Naive thymus-derived CD4-positive, alpha-beta T cell (primary cell): ENCODE measurements at regions of chr13 and their contacts with region 1.

Region 1: DNA sequence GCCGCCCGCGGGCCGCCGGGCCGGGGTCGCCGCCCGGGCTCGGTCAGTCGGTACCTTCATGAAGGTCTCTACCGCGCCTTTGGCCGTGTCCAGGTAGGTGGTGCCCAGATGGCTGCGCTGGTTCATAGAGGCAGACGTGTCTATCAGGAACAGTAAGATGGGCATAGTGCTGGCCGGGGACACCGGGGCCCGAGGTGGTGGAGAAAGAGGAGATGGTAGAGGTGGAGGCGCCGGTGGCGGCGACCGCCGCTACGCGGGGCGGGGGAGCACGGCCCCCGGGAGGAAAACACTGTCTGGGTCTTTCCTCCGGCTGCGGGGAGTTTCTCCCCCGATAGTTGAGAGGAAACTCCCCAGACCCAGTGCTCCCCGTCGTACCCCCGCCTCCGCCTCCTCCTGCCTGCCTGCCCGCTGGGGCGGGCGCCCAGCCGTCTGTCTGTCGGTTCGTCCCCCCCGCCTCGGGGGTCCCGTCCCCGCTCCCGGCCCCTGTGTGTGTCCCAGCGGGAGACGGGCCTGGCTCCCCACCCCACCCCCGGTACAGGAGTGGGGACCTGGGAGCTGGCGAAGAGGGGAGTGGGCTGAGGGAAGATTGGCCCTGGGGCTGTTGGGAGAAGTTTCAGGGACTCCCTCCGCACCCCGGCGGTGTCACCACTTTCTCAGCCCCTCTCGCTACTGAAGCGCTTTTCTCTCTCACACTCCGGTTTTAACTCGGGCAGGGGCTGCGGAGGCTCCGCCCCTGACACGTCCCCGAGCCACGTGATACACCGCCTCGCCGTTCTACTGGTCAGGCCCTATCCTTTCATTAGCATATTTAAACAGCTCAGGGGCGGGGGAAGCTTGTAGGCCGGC is at the start of gene INTS6:
- DNase-seq: peak; percentile 97 to 100 (median 99)
- ATAC-seq: peak; percentile 91
- H3K4me3 ChIP-seq: peak within 1 kb of the TSS; percentile 81
- H3K4me3 Mint-ChIP-seq: peak within 1 kb of the TSS; percentile 86 to 99 (median 94)
- H3K27ac ChIP-seq: peak within 1 kb of the TSS; percentile 99
- H3K27ac Mint-ChIP-seq: peak within 1 kb of the TSS; percentile 92 to 99 (median 96)
- H3K4me1 ChIP-seq: peaks cover 27 to 32% of the 10 kb centered on the region in 2 donors
- H3K4me1 Mint-ChIP-seq: peaks cover 19 to 66% (median 45%) of the 10 kb centered on the region in 7 donors
- H3K27me3 ChIP-seq: no peaks in the 10 kb centered on the region
- H3K27me3 Mint-ChIP-seq: no peaks in the 10 kb centered on the region
- total RNA-seq, gene INTS6: 60.9 to 67.0 (median 62.7) TPM

Region 2: GRCh38 chr13:49792550-49793324 is 1659.8 kb before region 1 on chr13 and contains the start of gene KPNA3:
- CTCF ChIA-PET with region 1: no interaction called
- POLR2A ChIA-PET with region 1: interaction called, 9 read pairs
- intact Hi-C with region 1: loop called (anchors 1 kb)
- DNase-seq: peak; percentile 86 to 97 (median 95)
- ATAC-seq: peak; percentile 93
- H3K4me3 ChIP-seq: peak within 1 kb of the TSS; percentile 96
- H3K4me3 Mint-ChIP-seq: peak within 1 kb of the TSS; percentile 87 to 99 (median 96)
- H3K27ac ChIP-seq: peak within 1 kb of the TSS; percentile 80
- H3K27ac Mint-ChIP-seq: peak within 1 kb of the TSS; percentile 91 to 98 (median 96)
- H3K4me1 ChIP-seq: peaks cover 19 to 23% of the 10 kb centered on the region in 2 donors
- H3K4me1 Mint-ChIP-seq: peaks cover 19 to 42% (median 31%) of the 10 kb centered on the region in 7 donors
- H3K27me3 ChIP-seq: no peaks in the 10 kb centered on the region
- H3K27me3 Mint-ChIP-seq: peaks cover 2 to 8% (median 3%) of the 10 kb centered on the region in 5 donors
- total RNA-seq, gene KPNA3: 17.0 to 38.7 (median 19.6) TPM

Region 3: GRCh38 chr13:50893211-50893852 is 559.3 kb before region 1 on chr13:
- CTCF ChIA-PET with region 1: no interaction called
- POLR2A ChIA-PET with region 1: no interaction called
- intact Hi-C with region 1: loop called in 1 of 2 experiments (anchors 5 kb)
- DNase-seq: peak in 7 of 9 donors; percentile 34 to 68 (median 55)
- ATAC-seq: peak; percentile 91
- H3K4me3 ChIP-seq: peak overlapping the region; percentile 30
- H3K4me3 Mint-ChIP-seq: peak overlapping the region; percentile 67 to 88 (median 82)
- H3K27ac ChIP-seq: peak overlapping the region; percentile 69
- H3K27ac Mint-ChIP-seq: peak overlapping the region; percentile 82 to 98 (median 95)
- H3K4me1 ChIP-seq: peaks cover 16 to 27% of the 10 kb centered on the region in 2 donors
- H3K4me1 Mint-ChIP-seq: peaks cover 26 to 50% (median 47%) of the 10 kb centered on the region in 7 donors
- H3K27me3 ChIP-seq: no peaks in the 10 kb centered on the region
- H3K27me3 Mint-ChIP-seq: no peaks in the 10 kb centered on the region

Region 4: DNA sequence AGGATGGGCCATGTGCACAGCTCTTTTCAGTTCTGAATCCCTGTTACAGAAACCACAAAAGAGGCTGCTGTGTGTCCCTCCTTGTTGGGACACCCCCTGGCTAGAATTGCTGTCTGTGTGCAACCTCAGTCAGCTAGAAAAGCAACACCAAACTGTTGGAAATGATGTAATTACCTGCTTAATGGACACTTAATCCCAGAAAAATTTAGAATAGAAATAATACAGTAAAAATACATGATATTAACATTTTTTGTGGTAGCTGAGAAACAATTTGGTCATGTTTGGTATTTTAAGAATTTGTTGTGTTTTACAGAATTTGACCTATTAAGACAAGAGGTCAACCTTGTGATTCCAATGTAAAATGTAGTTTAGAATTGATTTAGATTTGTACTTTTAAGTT is 183.5 kb before region 1 on chr13:
- CTCF ChIA-PET with region 1: no interaction called
- POLR2A ChIA-PET with region 1: no interaction called
- intact Hi-C with region 1: no loop called
- DNase-seq: no peak
- ATAC-seq: no peak
- H3K4me3 ChIP-seq: no peak overlapping the region
- H3K4me3 Mint-ChIP-seq: no peak overlapping the region
- H3K27ac ChIP-seq: no peak overlapping the region
- H3K27ac Mint-ChIP-seq: no peak overlapping the region
- H3K4me1 ChIP-seq: no peaks in the 10 kb centered on the region
- H3K4me1 Mint-ChIP-seq: no peaks in the 10 kb centered on the region
- H3K27me3 ChIP-seq: no peaks in the 10 kb centered on the region
- H3K27me3 Mint-ChIP-seq: peaks cover 0 to 6% (median 0%) of the 10 kb centered on the region in 5 donors

Region 5: GRCh38 chr13:51475727-51476501 is 23.3 kb after region 1 on chr13:
- CTCF ChIA-PET with region 1: interaction called, 3 read pairs
- POLR2A ChIA-PET with region 1: interaction called, 16 read pairs
- intact Hi-C with region 1: no loop called
- DNase-seq: peak in 1 of 9 donors; percentile 20
- ATAC-seq: no peak
- H3K4me3 ChIP-seq: no peak overlapping the region
- H3K4me3 Mint-ChIP-seq: no peak overlapping the region
- H3K27ac ChIP-seq: no peak overlapping the region
- H3K27ac Mint-ChIP-seq: peak overlapping the region in 2 of 9 donors; percentile 17 to 22
- H3K4me1 ChIP-seq: no peaks in the 10 kb centered on the region
- H3K4me1 Mint-ChIP-seq: peaks cover 0 to 10% (median 7%) of the 10 kb centered on the region in 7 donors
- H3K27me3 ChIP-seq: no peaks in the 10 kb centered on the region
- H3K27me3 Mint-ChIP-seq: no peaks in the 10 kb centered on the region

Region 6: GRCh38 chr13:51645154-51645650 is 192.6 kb after region 1 on chr13:
- CTCF ChIA-PET with region 1: no interaction called
- POLR2A ChIA-PET with region 1: interaction called, 13 read pairs
- intact Hi-C with region 1: no loop called
- DNase-seq: peak in 8 of 9 donors; percentile 29 to 80 (median 70)
- ATAC-seq: peak; percentile 92
- H3K4me3 ChIP-seq: no peak overlapping the region
- H3K4me3 Mint-ChIP-seq: peak overlapping the region; percentile 43 to 77 (median 64)
- H3K27ac ChIP-seq: peak overlapping the region; percentile 61
- H3K27ac Mint-ChIP-seq: peak overlapping the region; percentile 72 to 97 (median 92)
- H3K4me1 ChIP-seq: peaks cover 26 to 39% of the 10 kb centered on the region in 2 donors
- H3K4me1 Mint-ChIP-seq: peaks cover 37 to 57% (median 49%) of the 10 kb centered on the region in 7 donors
- H3K27me3 ChIP-seq: no peaks in the 10 kb centered on the region
- H3K27me3 Mint-ChIP-seq: no peaks in the 10 kb centered on the region

Region 7: DNA sequence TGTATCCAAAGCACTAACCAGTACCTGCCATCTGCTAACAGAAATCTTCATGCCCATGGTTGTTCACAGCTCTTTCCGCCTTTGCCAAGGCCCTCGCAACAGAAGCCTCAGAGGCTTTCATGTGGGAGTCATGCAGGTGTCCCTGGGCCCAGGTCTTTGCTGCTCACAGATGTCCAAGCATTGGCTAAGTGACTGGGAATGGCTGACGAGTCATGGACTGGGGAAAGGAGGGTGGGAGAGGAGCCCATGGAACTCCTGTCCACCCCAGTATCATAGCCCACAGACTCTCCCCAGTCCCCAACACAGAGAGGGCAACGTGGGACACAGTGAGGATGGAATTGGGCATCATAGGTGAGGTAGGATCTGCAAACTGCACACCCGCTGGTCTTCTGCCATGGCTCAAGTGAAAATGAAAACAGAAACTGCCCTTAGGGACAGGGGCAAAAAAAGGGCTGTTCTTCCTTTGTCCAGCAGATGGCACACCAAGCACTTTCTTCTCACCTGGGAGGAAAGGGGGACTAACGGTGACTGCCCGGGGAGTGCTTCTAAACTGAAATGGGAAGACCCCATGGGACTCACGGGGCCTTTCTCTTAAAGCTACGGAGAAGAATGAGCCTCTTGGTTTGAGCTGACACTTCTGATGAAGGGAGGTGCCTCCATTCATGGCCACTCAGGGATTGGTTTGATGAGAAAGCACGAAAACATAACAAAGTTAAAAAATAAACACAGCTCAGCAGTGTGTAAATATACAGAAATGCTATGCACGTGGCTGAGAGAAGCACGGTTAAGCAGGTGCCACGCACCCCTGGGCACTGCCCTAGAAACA is 362.5 kb after region 1 on chr13:
- CTCF ChIA-PET with region 1: no interaction called
- POLR2A ChIA-PET with region 1: interaction called, 64 read pairs
- intact Hi-C with region 1: no loop called
- DNase-seq: peak; percentile 40 to 81 (median 70)
- ATAC-seq: peak; percentile 84
- H3K4me3 ChIP-seq: peak overlapping the region; percentile 3
- H3K4me3 Mint-ChIP-seq: peak overlapping the region; percentile 44 to 100 (median 74)
- H3K27ac ChIP-seq: peak overlapping the region; percentile 85
- H3K27ac Mint-ChIP-seq: peak overlapping the region; percentile 61 to 99 (median 95)
- H3K4me1 ChIP-seq: peaks cover 21 to 75% of the 10 kb centered on the region in 2 donors
- H3K4me1 Mint-ChIP-seq: peaks cover 42 to 90% (median 86%) of the 10 kb centered on the region in 7 donors
- H3K27me3 ChIP-seq: no peaks in the 10 kb centered on the region
- H3K27me3 Mint-ChIP-seq: no peaks in the 10 kb centered on the region

Region 8: GRCh38 chr13:51879133-51879532 is 426.5 kb after region 1 on chr13:
- CTCF ChIA-PET with region 1: no interaction called
- POLR2A ChIA-PET with region 1: no interaction called
- intact Hi-C with region 1: no loop called
- DNase-seq: no peak
- ATAC-seq: no peak
- H3K4me3 ChIP-seq: no peak overlapping the region
- H3K4me3 Mint-ChIP-seq: no peak overlapping the region
- H3K27ac ChIP-seq: no peak overlapping the region
- H3K27ac Mint-ChIP-seq: no peak overlapping the region
- H3K4me1 ChIP-seq: no peaks in the 10 kb centered on the region
- H3K4me1 Mint-ChIP-seq: peaks cover 0 to 4% (median 0%) of the 10 kb centered on the region in 7 donors
- H3K27me3 ChIP-seq: no peaks in the 10 kb centered on the region
- H3K27me3 Mint-ChIP-seq: peaks cover 0 to 12% (median 6%) of the 10 kb centered on the region in 5 donors

Region 9: GRCh38 chr13:52194184-52194868 is 741.7 kb after region 1 on chr13:
- CTCF ChIA-PET with region 1: no interaction called
- POLR2A ChIA-PET with region 1: interaction called, 15 read pairs
- intact Hi-C with region 1: loop called in 1 of 2 experiments (anchors 1 kb)
- DNase-seq: peak; percentile 77 to 92 (median 84)
- ATAC-seq: peak; percentile 94
- H3K4me3 ChIP-seq: peak overlapping the region; percentile 67
- H3K4me3 Mint-ChIP-seq: peak overlapping the region; percentile 88 to 99 (median 98)
- H3K27ac ChIP-seq: peak overlapping the region; percentile 78
- H3K27ac Mint-ChIP-seq: peak overlapping the region; percentile 90 to 98 (median 95)
- H3K4me1 ChIP-seq: no peaks in the 10 kb centered on the region
- H3K4me1 Mint-ChIP-seq: peaks cover 15 to 42% (median 37%) of the 10 kb centered on the region in 7 donors
- H3K27me3 ChIP-seq: no peaks in the 10 kb centered on the region
- H3K27me3 Mint-ChIP-seq: peaks cover 0 to 3% (median 0%) of the 10 kb centered on the region in 5 donors